ENCODE measurements at regions of chr3 and their contacts with region 1.

Region 1: GRCh38 chr3:75727985-75728384 is 57.4 kb downstream of the ZNF717 start:
- DNase-seq: no peak
- H3K4me3 Mint-ChIP-seq: no peak overlapping the region
- H3K27ac Mint-ChIP-seq: no peak overlapping the region
- H3K4me1 Mint-ChIP-seq: no peaks in the 10 kb centered on the region
- H3K27me3 Mint-ChIP-seq: no peaks in the 10 kb centered on the region

Region 2: DNA sequence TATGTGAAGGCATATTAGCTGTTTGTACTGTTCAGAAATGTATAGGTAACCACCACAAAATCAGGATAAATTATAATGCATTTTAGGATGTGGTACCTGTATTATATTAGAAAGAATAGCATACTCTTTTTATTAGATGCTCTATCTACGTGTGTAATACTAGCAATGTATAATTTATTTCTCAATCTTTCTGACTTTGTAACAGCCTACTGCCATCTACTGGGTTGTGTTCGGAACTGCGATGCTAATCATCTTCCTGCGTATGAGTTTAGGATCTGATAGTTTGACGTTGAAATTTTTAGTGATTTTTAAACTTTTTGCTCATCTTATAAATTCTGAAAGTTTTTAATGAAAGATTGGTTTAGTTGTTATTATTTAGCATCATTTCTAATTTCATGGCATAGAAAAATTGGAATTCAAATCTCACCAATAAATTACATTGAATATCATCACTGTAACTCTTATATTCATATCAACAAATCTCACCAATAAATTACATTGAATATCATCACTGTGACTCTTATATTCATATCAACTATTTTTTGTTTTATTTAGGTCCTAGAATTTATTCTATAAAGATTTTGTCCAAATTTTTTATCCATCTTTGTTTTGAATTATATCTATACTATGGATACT is 380.1 kb after region 1 on chr3:
- intact Hi-C with region 1: loop called (anchors 5 kb)
- DNase-seq: no peak
- H3K4me3 Mint-ChIP-seq: no peak overlapping the region
- H3K27ac Mint-ChIP-seq: no peak overlapping the region
- H3K4me1 Mint-ChIP-seq: no peaks in the 10 kb centered on the region
- H3K27me3 Mint-ChIP-seq: no peaks in the 10 kb centered on the region

Measured in activated CD4-positive, alpha-beta T cell treated with anti-CD3 and anti-CD28 coated beads, Interleukin-2, amount 10 ng/mL, durations not matched to agents 24 days and 14 days (primary cell).